Mammary epithelial cell (primary cell): ENCODE measurements at regions of chr16 and their contacts with region 1.

Region 1: DNA sequence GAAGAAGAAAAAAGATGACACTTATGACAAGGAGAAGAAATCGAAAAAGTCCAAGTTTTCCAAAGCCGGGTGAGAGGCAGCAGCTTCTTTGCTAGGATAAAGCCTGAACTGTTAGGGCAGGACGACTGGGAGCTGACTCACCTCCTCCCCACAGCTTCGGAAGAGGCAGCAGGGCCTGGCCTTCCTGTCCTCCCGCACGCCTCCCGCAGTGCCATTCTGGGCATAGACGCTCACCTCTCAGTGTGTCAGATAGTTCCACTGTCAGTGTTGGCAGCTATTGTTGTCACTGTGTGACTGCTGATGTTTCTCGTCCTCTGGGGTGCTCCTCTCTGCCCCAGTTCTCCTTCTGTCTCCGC is 12.6 kb downstream of the UBN1 start:
- DNase-seq: peak; percentile 76
- H3K4me3 ChIP-seq: no peak overlapping the region
- H3K27ac ChIP-seq: peak overlapping the region; percentile 74
- H3K4me1 ChIP-seq: peaks cover 37% of the 10 kb centered on the region
- H3K27me3 ChIP-seq: no peaks in the 10 kb centered on the region
- CTCF ChIP-seq: no peak

Region 2: DNA sequence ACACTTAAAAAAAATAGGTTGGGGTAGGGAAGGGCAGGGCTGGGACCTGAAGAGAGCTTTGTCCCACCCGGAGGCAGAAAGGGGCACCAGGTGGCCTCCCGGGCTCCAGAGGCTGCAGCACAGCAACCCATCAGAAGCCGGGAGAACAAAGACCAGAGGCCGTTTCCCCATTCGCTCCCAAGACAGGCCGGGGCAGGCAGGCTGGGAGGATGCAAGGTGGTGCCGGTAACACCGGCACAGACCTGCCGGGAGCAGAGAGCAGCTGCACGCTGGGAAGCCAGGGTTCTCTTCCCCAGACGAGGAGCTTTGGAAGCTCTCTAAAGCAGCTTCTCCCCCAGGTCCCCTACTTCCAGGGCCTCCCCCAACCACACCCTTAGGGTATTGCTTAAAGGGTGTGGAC is 71.5 kb after region 1 on chr16:
- CTCF ChIA-PET with region 1: no interaction called
- dilution Hi-C with region 1: loop called (anchors 5 kb)
- in situ Hi-C with region 1: no loop called
- intact Hi-C with region 1: no loop called
- DNase-seq: no peak
- H3K4me3 ChIP-seq: no peak overlapping the region
- H3K27ac ChIP-seq: no peak overlapping the region
- H3K4me1 ChIP-seq: peaks cover 15% of the 10 kb centered on the region
- H3K27me3 ChIP-seq: no peaks in the 10 kb centered on the region
- CTCF ChIP-seq: no peak